CD4-positive, alpha-beta memory T cell (primary cell): ENCODE measurements at regions of chr13 and their contacts with region 1.

Region 1: DNA sequence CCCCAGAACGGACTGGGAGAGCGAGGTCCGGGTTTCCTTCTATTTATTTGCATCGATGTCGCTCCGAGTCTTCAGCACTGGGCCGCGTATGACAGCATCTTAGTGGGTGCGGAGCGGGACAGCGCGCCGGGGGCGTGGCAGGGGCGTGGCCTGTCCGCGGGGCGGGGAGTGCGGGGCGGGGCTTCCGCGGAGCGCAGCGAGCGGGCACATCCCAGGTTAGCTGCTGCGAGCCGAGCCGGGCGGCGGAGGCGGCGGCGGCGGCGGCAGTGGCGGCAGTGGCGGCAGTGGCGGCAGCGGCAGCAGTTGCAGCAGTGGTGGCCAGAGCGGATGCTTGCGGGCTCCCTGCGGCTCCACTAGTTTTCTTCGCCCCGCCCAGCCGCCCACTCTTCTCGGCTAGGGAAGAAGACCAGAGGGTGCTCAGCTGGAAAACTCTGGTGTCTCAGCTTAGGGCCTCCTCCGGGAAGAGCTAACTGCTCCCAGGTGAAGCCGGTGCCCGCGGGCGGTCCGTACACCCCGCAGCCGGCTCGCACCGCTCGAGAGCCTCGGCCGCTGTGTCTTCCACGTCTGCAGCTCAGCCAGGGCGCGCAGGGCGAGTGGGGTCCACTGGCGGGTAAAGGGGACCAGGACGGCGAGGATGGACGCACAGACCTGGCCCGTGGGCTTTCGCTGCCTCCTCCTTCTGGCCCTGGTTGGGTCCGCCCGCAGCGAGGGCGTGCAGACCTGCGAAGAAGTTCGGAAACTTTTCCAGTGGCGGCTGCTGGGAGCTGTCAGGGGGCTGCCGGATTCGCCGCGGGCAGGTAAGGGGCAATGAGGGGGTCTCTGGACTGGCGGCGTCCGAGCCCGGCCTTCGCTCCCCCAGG is at the start of gene GPC5:
- DNase-seq: peak; percentile 74 to 81 (median 79)
- H3K4me3 ChIP-seq: peak within 1 kb of the TSS in 1 of 2 donors; percentile 46
- H3K4me3 Mint-ChIP-seq: peak within 1 kb of the TSS; percentile 71 to 90 (median 80)
- H3K27ac ChIP-seq: no peak within 1 kb of the TSS
- H3K27ac Mint-ChIP-seq: peak within 1 kb of the TSS in 2 of 7 donors; percentile 5 to 42
- H3K4me1 ChIP-seq: peaks cover 17% of the 10 kb centered on the region
- H3K4me1 Mint-ChIP-seq: peaks cover 7 to 17% (median 14%) of the 10 kb centered on the region in 4 donors
- H3K27me3 ChIP-seq: peaks cover 12% of the 10 kb centered on the region
- H3K27me3 Mint-ChIP-seq: peaks cover 24 to 25% of the 10 kb centered on the region in 2 donors
- total RNA-seq, gene GPC5: 0.14 TPM in 1 of 2 experiments, not detected in the other

Region 2: GRCh38 chr13:91318886-91319285 is 79.8 kb before region 1 on chr13:
- CTCF ChIA-PET with region 1: no interaction called
- POLR2A ChIA-PET with region 1: no interaction called
- intact Hi-C with region 1: no loop called
- DNase-seq: no peak
- H3K4me3 ChIP-seq: no peak overlapping the region
- H3K4me3 Mint-ChIP-seq: no peak overlapping the region
- H3K27ac ChIP-seq: no peak overlapping the region
- H3K27ac Mint-ChIP-seq: no peak overlapping the region
- H3K4me1 ChIP-seq: no peaks in the 10 kb centered on the region
- H3K4me1 Mint-ChIP-seq: peaks cover 9 to 13% (median 10%) of the 10 kb centered on the region in 4 donors
- H3K27me3 ChIP-seq: no peaks in the 10 kb centered on the region
- H3K27me3 Mint-ChIP-seq: peaks cover 3 to 8% of the 10 kb centered on the region in 2 donors

Region 3: GRCh38 chr13:91348906-91349435 is 49.7 kb before region 1 on chr13:
- CTCF ChIA-PET with region 1: interaction called, 4 read pairs
- POLR2A ChIA-PET with region 1: interaction called, 3 read pairs
- intact Hi-C with region 1: loop called (anchors 1 kb)
- DNase-seq: peak; percentile 86 to 93 (median 88)
- H3K4me3 ChIP-seq: peak overlapping the region; percentile 39 to 74
- H3K4me3 Mint-ChIP-seq: peak overlapping the region; percentile 87 to 97 (median 92)
- H3K27ac ChIP-seq: peak overlapping the region; percentile 64
- H3K27ac Mint-ChIP-seq: peak overlapping the region; percentile 90 to 95 (median 93)
- H3K4me1 ChIP-seq: peaks cover 39% of the 10 kb centered on the region
- H3K4me1 Mint-ChIP-seq: peaks cover 20 to 45% (median 25%) of the 10 kb centered on the region in 4 donors
- H3K27me3 ChIP-seq: no peaks in the 10 kb centered on the region
- H3K27me3 Mint-ChIP-seq: peaks cover 0 to 4% of the 10 kb centered on the region in 2 donors

Region 4: DNA sequence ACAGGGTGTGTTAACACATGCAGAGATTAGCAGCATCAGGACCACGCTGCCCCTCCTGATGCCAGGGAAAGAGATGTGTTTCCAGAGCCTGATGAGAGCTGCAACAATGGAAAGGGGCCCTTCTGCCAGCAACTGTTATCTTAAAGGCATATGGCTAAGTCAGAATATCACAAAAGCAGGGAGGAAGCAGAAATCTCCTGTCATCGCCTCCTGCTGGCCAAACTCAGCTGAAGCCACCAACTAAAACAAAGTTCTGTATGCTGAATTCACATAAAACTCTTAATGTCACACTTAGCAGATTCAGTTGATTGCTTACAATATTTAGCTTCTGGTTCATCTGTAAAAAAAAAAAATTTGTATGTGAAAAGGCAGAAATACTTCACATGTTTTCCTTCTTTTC is 177.9 kb after region 1 on chr13:
- CTCF ChIA-PET with region 1: no interaction called
- POLR2A ChIA-PET with region 1: no interaction called
- intact Hi-C with region 1: no loop called
- DNase-seq: no peak
- H3K4me3 ChIP-seq: no peak overlapping the region
- H3K4me3 Mint-ChIP-seq: no peak overlapping the region
- H3K27ac ChIP-seq: no peak overlapping the region
- H3K27ac Mint-ChIP-seq: no peak overlapping the region
- H3K4me1 ChIP-seq: no peaks in the 10 kb centered on the region
- H3K4me1 Mint-ChIP-seq: no peaks in the 10 kb centered on the region
- H3K27me3 ChIP-seq: no peaks in the 10 kb centered on the region
- H3K27me3 Mint-ChIP-seq: no peaks in the 10 kb centered on the region